ENCODE measurements at regions of chr10 and their contacts with region 1.

Region 1: DNA sequence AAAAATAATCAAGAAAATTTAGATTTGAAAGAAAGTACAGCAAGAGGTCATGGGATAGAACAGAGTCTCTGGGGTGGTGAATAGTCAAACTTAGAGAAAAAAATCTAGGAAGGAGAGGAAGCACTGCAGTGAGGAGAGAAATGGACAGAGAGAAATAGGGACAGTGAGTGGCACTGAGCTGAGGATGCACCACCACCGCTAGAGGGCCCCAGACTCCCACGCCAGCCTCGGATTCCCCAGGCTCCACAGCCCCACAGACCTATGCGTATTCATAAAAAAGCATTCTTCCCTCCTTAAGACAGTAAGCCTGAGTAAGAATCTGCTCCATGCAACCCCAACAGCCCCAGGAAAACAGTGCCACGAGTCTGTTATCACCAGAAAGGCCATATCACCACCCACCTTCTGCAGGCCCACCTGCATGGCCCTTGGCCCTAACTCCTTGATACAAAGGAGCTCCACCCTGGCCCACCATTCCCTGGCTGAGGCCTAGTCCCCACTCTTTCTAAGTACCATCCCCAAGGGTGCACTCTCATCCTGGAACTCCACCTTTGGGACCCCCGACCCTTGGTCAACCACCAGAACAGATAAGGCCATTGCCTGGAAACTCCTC is 91.0 kb downstream of the ALOX5 start:
- DNase-seq: no peak
- H3K4me3 ChIP-seq: no peak overlapping the region
- H3K27ac ChIP-seq: no peak overlapping the region
- H3K4me1 ChIP-seq: peaks cover 0 to 8% (median 4%) of the 10 kb centered on the region in 4 donors
- H3K27me3 ChIP-seq: no peaks in the 10 kb centered on the region
- CTCF ChIP-seq: peak; percentile 46 to 87 (median 75)
- EP300 ChIP-seq: no peak
- POLR2A ChIP-seq: no peak

Region 2: DNA sequence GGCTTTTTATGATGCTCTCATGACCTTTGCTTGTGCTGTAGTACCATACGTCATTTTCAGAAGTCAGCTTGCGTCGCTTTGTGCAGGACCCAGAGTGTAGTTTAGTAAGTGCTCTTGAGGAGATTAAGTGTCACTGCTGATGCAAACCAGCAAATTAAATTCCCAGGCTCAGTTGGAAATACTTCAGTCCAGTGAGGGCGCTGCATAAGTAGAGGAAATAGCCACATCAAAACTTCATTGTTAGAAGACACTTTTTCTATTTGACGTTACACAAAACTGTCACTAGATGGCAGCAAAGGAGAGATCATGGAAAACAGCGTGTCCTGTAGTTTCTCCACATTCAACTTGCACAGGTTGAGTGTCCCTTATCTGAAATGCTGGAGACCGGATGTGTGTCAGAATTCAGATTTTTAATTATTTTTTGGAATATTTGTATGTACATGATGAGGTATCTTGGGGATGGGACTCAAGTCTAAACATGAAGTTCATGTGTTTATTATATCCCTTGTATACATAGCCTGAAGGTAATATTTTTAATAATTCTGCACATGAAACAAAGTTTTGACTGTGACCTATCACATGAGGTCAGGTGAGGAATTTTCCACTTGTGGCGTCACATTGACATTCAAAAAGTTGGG is 456.4 kb before region 1 on chr10:
- intact Hi-C with region 1: loop called (anchors 10 kb)
- DNase-seq: peak; percentile 64
- H3K4me3 ChIP-seq: no peak overlapping the region
- H3K27ac ChIP-seq: peak overlapping the region in 2 of 4 donors; percentile 15
- H3K4me1 ChIP-seq: peaks cover 0 to 12% (median 3%) of the 10 kb centered on the region in 4 donors
- H3K27me3 ChIP-seq: no peaks in the 10 kb centered on the region
- CTCF ChIP-seq: peak in 3 of 4 experiments; percentile 56 to 70 (median 69)
- EP300 ChIP-seq: no peak
- POLR2A ChIP-seq: no peak

Region 3: GRCh38 chr10:45532480-45532879 is 67.4 kb after region 1 on chr10:
- intact Hi-C with region 1: no loop called
- DNase-seq: no peak
- H3K4me3 ChIP-seq: no peak overlapping the region
- H3K27ac ChIP-seq: no peak overlapping the region
- H3K4me1 ChIP-seq: no peaks in the 10 kb centered on the region
- H3K27me3 ChIP-seq: no peaks in the 10 kb centered on the region
- CTCF ChIP-seq: no peak
- EP300 ChIP-seq: no peak
- POLR2A ChIP-seq: no peak

Region 4: GRCh38 chr10:45594276-45595106 is 129.4 kb after region 1 on chr10:
- intact Hi-C with region 1: loop called (anchors 2 kb)
- DNase-seq: peak; percentile 95
- H3K4me3 ChIP-seq: peak overlapping the region; percentile 61 to 98 (median 82)
- H3K27ac ChIP-seq: peak overlapping the region; percentile 66 to 81 (median 74)
- H3K4me1 ChIP-seq: peaks cover 0 to 26% (median 17%) of the 10 kb centered on the region in 4 donors
- H3K27me3 ChIP-seq: peaks cover 0 to under 1% (median 0%) of the 10 kb centered on the region in 3 donors
- CTCF ChIP-seq: no peak
- EP300 ChIP-seq: peak in 1 of 4 donors; percentile 33
- POLR2A ChIP-seq: no peak

Region 5: GRCh38 chr10:45672181-45673073 is 207.4 kb after region 1 on chr10 and contains the start of gene ZFAND4:
- intact Hi-C with region 1: loop called (anchors 2 kb)
- DNase-seq: peak; percentile 99
- H3K4me3 ChIP-seq: peak within 1 kb of the TSS; percentile 66 to 84 (median 74)
- H3K27ac ChIP-seq: peak within 1 kb of the TSS; percentile 84 to 88 (median 86)
- H3K4me1 ChIP-seq: peaks cover 0 to 12% (median 5%) of the 10 kb centered on the region in 4 donors
- H3K27me3 ChIP-seq: no peaks in the 10 kb centered on the region
- CTCF ChIP-seq: peak in 1 of 4 experiments; percentile 40
- EP300 ChIP-seq: no peak
- POLR2A ChIP-seq: no peak
- total RNA-seq, gene ZFAND4: 13.9 to 24.2 (median 17.9) TPM